MCF 10A (cell line): ENCODE measurements at regions of chr11 and their contacts with region 1.

Region 1: DNA sequence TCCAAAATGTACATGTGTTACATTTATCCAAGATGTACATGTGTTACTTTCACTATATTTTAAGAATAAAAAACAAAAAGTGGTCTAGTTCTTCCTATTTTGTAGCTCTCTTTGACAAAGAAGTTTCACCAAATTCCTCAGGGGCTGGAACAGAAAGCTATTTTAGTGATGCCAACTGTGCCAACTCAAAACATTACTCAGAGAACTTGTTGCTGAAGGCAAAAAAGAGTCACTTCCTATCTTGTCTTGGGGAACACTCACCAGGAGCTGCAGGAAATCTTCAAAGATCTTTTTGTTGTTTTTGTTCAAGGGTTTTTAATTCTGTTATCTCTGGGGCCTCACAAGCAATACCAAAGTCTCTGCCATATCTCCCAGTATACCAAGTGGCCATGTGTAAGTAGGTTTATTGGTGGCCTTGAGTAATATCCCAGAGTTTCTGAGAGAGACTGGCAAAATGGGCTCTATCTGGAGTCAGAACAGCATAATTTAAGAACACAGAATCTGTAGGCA is 13.6 kb upstream of the EED start:
- DNase-seq: peak; percentile 40
- H3K4me3 Mint-ChIP-seq: no peak overlapping the region
- H3K27ac Mint-ChIP-seq: no peak overlapping the region
- H3K4me1 Mint-ChIP-seq: peaks cover 18% of the 10 kb centered on the region
- H3K27me3 Mint-ChIP-seq: no peaks in the 10 kb centered on the region
- CTCF ChIP-seq: no peak

Region 2: DNA sequence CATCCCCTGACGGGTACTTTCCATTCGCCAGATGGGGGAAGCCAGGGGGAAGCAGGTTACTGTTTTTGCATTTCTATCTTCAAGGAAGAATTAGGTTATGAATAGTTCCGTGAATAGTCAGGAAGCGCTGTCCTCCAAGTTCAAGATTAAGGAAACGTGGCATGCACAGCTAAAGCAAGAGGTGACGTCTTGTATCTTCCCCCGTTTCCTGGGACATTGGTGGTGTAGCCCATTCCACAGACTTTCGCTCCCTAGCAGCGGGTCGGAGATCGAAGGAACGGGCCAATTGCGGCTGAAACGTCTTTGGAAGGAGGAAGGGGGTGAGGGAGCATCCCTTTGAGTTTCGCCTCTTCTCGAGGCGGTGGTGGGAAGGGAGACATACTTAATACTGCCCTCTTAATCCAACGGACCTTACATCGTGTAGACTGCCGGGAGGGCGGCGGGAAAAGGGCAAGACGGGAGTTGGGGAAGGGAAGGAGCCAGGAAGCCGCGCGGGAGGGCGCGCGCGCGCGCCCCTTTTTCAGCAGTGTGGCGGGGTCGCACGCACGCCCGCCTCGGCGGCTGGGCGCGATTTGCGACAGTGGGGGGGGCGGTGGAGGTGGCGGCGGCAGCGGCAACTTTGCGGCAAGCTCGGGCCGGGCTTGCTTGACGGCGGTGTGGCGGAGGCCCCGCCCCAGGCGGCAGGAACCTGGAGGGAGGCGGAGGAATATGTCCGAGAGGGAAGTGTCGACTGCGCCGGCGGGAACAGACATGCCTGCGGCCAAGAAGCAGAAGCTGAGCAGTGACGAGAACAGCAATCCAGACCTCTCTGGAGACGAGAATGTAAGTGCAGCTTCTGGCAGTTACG is 13.8 kb after region 1 on chr11 and contains the start of gene EED:
- CTCF ChIA-PET with region 1: no interaction called
- POLR2A ChIA-PET with region 1: interaction called, 12 read pairs
- intact Hi-C with region 1: no loop called
- DNase-seq: peak; percentile 91
- H3K4me3 Mint-ChIP-seq: no peak within 1 kb of the TSS
- H3K27ac Mint-ChIP-seq: no peak within 1 kb of the TSS
- H3K4me1 Mint-ChIP-seq: peaks cover 30% of the 10 kb centered on the region
- H3K27me3 Mint-ChIP-seq: no peaks in the 10 kb centered on the region
- CTCF ChIP-seq: no peak
- total RNA-seq, gene EED: 20.9 and 22.9 TPM in 2 replicates